Activated T-helper 1 cell treated with anti-CD3 and anti-CD28 coated beads, Interleukin-12 subunit alpha, Interleukin-12 subunit beta, Interleukin-2, Interleukin-4 antibody, amounts not matched to agents 30 ng/mL and 10 ng/mL and 1 ng/mL, durations not matched to agents 14 hours and 24 hours and 36 hours (primary cell): ENCODE measurements at regions of chr7 and their contacts with region 1.

Region 1: DNA sequence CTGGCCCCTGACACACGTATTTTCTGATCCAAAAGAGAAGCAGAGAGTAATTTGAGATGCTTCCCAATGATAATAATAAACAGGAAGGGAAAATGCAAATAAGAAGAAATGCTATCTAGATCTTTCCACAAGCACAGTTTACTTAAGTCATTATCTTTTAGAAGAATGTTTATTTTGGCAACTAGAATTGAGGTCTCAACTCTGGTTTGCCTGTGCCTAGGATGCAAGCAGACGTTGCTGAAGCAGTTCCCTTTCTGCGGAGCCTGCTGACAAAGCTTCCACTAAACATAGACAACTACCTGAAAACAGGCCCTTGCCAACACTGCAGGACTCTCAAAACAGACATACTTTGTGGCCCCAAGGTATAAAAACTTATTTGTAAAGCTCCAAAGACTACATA is 315.8 kb upstream of the POM121L12 start:
- DNase-seq: no peak
- H3K4me3 Mint-ChIP-seq: no peak overlapping the region
- H3K27ac Mint-ChIP-seq: no peak overlapping the region
- H3K4me1 Mint-ChIP-seq: no peaks in the 10 kb centered on the region
- H3K27me3 Mint-ChIP-seq: no peaks in the 10 kb centered on the region

Region 2: DNA sequence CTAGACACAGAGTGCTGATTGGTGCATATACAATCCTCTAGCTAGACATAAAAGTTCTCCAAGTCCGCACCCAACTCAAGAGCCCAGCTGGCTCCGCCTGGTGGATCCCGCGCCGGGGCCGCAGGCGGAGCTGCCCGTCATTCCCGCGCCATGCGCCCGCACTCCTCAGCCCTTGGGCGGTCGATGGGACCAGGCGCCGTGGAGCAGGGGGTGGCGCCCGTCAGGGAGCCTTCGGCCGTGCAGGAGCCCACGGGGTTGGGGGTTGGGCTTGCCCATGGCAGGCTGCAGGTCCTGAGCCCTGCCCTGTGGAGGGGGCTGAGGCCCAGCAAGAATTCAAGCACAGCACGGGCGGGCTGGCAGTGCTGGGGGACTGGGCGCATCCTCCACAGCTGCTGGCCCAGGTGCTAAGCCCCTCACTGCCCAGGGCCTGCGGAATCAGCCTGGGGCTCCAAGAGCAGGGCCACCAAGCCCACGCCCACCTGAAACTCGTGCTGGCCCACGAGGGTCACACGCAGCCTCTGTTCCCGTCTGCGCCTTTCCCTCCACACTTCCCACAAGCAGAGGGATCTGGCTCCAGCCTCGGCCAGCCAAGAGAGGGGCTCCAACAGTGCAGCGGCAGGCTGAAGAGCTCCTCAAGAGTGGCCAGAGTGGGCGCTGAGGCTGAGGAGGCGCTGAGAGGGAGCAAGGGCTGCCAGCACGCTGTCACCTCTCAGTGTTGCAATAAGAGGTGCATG is 288.4 kb before region 1 on chr7:
- intact Hi-C with region 1: no loop called
- DNase-seq: no peak
- H3K4me3 Mint-ChIP-seq: no peak overlapping the region
- H3K27ac Mint-ChIP-seq: no peak overlapping the region
- H3K4me1 Mint-ChIP-seq: no peaks in the 10 kb centered on the region
- H3K27me3 Mint-ChIP-seq: no peaks in the 10 kb centered on the region

Region 3: GRCh38 chr7:52669027-52669426 is 50.6 kb before region 1 on chr7:
- intact Hi-C with region 1: loop called (anchors 2 kb)
- DNase-seq: no peak
- H3K4me3 Mint-ChIP-seq: no peak overlapping the region
- H3K27ac Mint-ChIP-seq: no peak overlapping the region
- H3K4me1 Mint-ChIP-seq: no peaks in the 10 kb centered on the region
- H3K27me3 Mint-ChIP-seq: no peaks in the 10 kb centered on the region

Region 4: DNA sequence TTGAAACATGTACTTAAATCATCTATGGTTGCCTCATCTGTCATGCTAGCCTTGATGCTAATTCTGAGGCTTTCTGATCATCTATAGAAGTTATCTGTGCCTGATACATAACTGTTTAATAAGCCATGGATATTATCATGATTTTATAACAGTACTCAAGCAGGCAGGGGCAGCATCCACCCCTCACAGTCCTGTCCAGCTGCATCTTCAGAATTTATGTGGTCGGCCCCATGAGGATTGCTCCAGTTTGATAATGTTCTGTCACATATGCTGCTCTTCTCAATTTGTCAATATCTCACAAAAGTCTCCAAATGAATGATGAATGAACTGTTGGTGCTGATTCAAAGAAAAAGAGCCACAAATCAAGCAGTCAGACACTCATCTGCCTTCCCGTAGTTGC is 19.3 kb before region 1 on chr7:
- intact Hi-C with region 1: loop called (anchors 1 kb)
- DNase-seq: no peak
- H3K4me3 Mint-ChIP-seq: no peak overlapping the region
- H3K27ac Mint-ChIP-seq: no peak overlapping the region
- H3K4me1 Mint-ChIP-seq: no peaks in the 10 kb centered on the region
- H3K27me3 Mint-ChIP-seq: no peaks in the 10 kb centered on the region